B cell (primary cell): ENCODE measurements at regions of chr14 and their contacts with region 1.

Region 1: DNA sequence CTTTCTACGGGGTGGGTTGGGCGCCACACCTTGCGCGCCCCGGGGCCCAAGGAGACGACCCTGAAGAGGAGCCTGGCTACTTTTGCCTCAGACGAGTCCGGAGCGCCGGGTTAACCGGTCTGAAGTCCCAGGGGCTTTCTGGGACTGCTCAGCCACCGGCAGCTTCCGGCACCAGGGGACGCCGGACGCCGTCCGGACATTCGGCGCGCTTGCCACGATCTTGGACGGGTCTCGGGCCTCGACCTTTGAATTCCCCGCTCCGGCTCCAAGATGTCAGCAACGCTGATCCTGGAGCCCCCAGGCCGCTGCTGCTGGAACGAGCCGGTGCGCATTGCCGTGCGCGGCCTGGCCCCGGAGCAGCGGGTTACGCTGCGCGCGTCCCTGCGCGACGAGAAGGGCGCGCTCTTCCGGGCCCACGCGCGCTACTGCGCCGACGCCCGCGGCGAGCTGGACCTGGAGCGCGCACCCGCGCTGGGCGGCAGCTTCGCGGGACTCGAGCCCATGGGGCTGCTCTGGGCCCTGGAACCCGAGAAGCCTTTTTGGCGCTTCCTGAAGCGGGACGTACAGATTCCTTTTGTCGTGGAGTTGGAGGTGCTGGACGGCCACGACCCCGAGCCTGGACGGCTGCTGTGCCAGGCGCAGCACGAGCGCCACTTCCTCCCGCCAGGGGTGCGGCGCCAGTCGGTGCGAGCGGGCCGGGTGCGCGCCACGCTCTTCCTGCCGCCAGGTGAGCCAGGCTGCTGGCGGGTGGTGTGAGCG is at the start of gene ACOT4:
- DNase-seq: peak; percentile 77
- ATAC-seq: peak; percentile 81
- H3K4me3 ChIP-seq: peak within 1 kb of the TSS in 4 of 5 experiments; percentile 44 to 79 (median 66)
- H3K4me3 Mint-ChIP-seq: peak within 1 kb of the TSS; percentile 71
- H3K27ac ChIP-seq: no peak within 1 kb of the TSS
- H3K27ac Mint-ChIP-seq: peak within 1 kb of the TSS; percentile 34
- H3K4me1 ChIP-seq: peaks cover 4 to 8% of the 10 kb centered on the region in 2 donors
- H3K4me1 Mint-ChIP-seq: peaks cover 3% of the 10 kb centered on the region
- H3K27me3 ChIP-seq: peaks cover 0 to 2% (median 0%) of the 10 kb centered on the region in 4 experiments
- H3K27me3 Mint-ChIP-seq: no peaks in the 10 kb centered on the region
- CTCF ChIP-seq: peak; percentile 18
- total RNA-seq, gene ACOT4: 0.42 and 0.83 TPM in 2 replicates

Region 2: GRCh38 chr14:73613046-73613383 is 21.1 kb after region 1 on chr14:
- CTCF ChIA-PET with region 1: interaction called, 4 read pairs
- POLR2A ChIA-PET with region 1: interaction called, 5 read pairs
- intact Hi-C with region 1: loop called (anchors 1 kb)
- DNase-seq: no peak
- ATAC-seq: peak; percentile 10
- H3K4me3 ChIP-seq: peak overlapping the region; percentile 15 to 73 (median 59)
- H3K4me3 Mint-ChIP-seq: peak overlapping the region; percentile 87
- H3K27ac ChIP-seq: no peak overlapping the region
- H3K27ac Mint-ChIP-seq: peak overlapping the region; percentile 70
- H3K4me1 ChIP-seq: peaks cover 4% of the 10 kb centered on the region in 2 donors
- H3K4me1 Mint-ChIP-seq: peaks cover 6% of the 10 kb centered on the region
- H3K27me3 ChIP-seq: peaks cover 0 to 6% (median 0%) of the 10 kb centered on the region in 4 experiments
- H3K27me3 Mint-ChIP-seq: peaks cover 5% of the 10 kb centered on the region
- CTCF ChIP-seq: no peak